ENCODE measurements at regions of chr2 and their contacts with region 1.

Region 1: GRCh38 chr2:38274286-38275276 is 102.5 kb downstream of the ATL2 start:
- DNase-seq: peak in 1 of 2 donors; percentile 87
- H3K4me3 ChIP-seq: no peak overlapping the region
- H3K27ac ChIP-seq: no peak overlapping the region
- H3K4me1 ChIP-seq: peaks cover 0 to 9% (median 0%) of the 10 kb centered on the region in 4 donors
- H3K27me3 ChIP-seq: no peaks in the 10 kb centered on the region
- CTCF ChIP-seq: peak in 4 of 7 experiments; percentile 35 to 62 (median 43)
- EP300 ChIP-seq: no peak
- POLR2A ChIP-seq: no peak

Region 2: DNA sequence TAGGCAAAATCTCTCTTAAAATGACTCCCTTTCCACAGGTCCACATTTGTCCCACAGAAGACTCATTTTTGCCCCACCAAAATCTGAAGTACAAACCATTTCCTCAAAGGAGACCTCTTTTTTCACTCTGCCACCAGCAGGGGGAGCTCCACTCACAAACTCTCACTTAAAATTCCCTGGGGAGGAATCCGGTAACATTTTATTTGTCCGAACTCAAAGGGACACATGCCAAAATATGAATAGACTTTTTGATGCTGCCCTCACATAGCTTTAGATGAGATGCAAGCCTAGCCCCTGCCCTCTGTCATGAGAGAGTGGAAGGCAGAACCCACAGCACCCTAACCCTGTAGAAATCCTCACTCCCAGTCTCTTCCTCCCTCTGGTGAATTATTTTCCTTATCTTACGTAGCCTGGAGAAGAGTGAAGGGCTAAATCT is 292.4 kb before region 1 on chr2:
- intact Hi-C with region 1: loop called (anchors 5 kb)
- DNase-seq: peak; percentile 70 to 83
- H3K4me3 ChIP-seq: peak overlapping the region in 2 of 4 donors; percentile 14 to 25
- H3K27ac ChIP-seq: no peak overlapping the region
- H3K4me1 ChIP-seq: peaks cover 0 to 7% (median 0%) of the 10 kb centered on the region in 4 donors
- H3K27me3 ChIP-seq: no peaks in the 10 kb centered on the region
- CTCF ChIP-seq: peak in 5 of 7 experiments; percentile 47 to 78 (median 75)
- EP300 ChIP-seq: no peak
- POLR2A ChIP-seq: no peak

Region 3: GRCh38 chr2:38079116-38080052 is 195.2 kb before region 1 on chr2:
- intact Hi-C with region 1: no loop called
- DNase-seq: no peak
- H3K4me3 ChIP-seq: no peak overlapping the region
- H3K27ac ChIP-seq: peak overlapping the region in 2 of 5 donors; percentile 26 to 42
- H3K4me1 ChIP-seq: peaks cover 13 to 53% (median 37%) of the 10 kb centered on the region in 4 donors
- H3K27me3 ChIP-seq: peaks cover 0 to 42% (median 19%) of the 10 kb centered on the region in 3 donors
- CTCF ChIP-seq: no peak
- EP300 ChIP-seq: no peak
- POLR2A ChIP-seq: no peak

Measured in stomach (tissue), 19 donors.